ENCODE measurements at regions of chr1 and their contacts with region 1.

Region 1: GRCh38 chr1:204513099-204513716 is 3.0 kb upstream of the MDM4 start:
- DNase-seq: no peak
- ATAC-seq: no peak
- H3K4me3 ChIP-seq: no peak overlapping the region
- H3K27ac ChIP-seq: no peak overlapping the region
- H3K4me1 ChIP-seq: peaks cover 2% of the 10 kb centered on the region; the same call in 1 of the 2 replicates
- H3K27me3 ChIP-seq: no peaks in the 10 kb centered on the region
- CTCF ChIP-seq: no peak
- POLR2A ChIP-seq: no peak
- RAD21 ChIP-seq: no peak

Region 2: DNA sequence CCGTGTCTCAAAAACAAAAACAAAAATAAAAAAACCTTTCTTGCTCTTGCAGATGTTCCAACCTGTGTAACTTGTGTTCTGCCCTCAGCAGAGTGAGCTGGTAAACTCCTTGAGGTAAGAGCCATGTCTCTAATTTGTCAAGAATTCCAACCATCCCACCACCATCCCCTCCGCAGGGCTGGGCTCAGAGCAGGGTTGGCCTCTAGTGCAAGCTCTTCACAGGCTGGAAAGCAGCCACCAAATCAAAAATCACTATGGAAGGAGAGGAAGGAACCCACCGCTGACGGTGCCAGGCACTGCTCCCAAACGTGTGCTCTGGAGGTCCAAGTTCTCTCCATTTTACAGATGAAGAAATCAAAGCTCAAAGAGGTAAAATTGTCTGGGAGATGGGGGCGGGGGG is 162.9 kb before region 1 on chr1:
- CTCF ChIA-PET with region 1: no interaction called
- POLR2A ChIA-PET with region 1: interaction called, 11 read pairs
- dilution Hi-C with region 1: no loop called
- in situ Hi-C with region 1: no loop called
- intact Hi-C with region 1: no loop called
- DNase-seq: no peak
- ATAC-seq: no peak
- H3K4me3 ChIP-seq: 0 out of 2 replicates have a peak overlapping the region, but pooled peaks have one; percentile 11
- H3K27ac ChIP-seq: no peak overlapping the region
- H3K4me1 ChIP-seq: peaks cover 22% of the 10 kb centered on the region
- H3K27me3 ChIP-seq: no peaks in the 10 kb centered on the region
- CTCF ChIP-seq: no peak
- POLR2A ChIP-seq: no peak
- RAD21 ChIP-seq: no peak